Transverse colon (tissue), 4 donors: ENCODE measurements at regions of chr11 and their contacts with region 1.

Region 1: GRCh38 chr11:131796541-131796940 is 426.1 kb downstream of the NTM start:
- DNase-seq: no peak
- H3K4me3 ChIP-seq: no peak overlapping the region
- H3K27ac ChIP-seq: no peak overlapping the region
- H3K4me1 ChIP-seq: no peaks in the 10 kb centered on the region
- H3K27me3 ChIP-seq: no peaks in the 10 kb centered on the region
- CTCF ChIP-seq: no peak
- EP300 ChIP-seq: no peak
- POLR2A ChIP-seq: no peak

Region 2: DNA sequence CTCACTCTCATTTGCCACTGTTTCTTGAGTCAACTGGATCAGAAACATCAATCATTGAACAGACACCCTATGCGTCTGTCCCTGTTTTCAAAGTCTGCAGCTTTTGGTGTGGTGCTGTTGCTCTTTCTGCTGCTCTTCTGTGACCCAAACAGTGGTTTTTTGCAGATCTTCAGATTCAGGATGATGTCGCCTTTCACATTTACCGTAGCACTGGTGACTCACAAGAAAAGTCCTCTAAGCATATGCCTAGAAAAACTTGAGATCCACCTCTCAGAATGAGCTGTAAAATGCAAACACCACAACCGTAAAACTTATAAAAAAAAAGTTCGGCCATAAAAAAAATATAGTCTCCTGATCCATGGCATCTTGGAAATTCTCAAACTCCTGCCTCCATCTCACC is 25.7 kb before region 1 on chr11:
- in situ Hi-C with region 1: no loop called
- intact Hi-C with region 1: loop called (anchors 1 kb)
- DNase-seq: no peak
- H3K4me3 ChIP-seq: no peak overlapping the region
- H3K27ac ChIP-seq: no peak overlapping the region
- H3K4me1 ChIP-seq: no peaks in the 10 kb centered on the region
- H3K27me3 ChIP-seq: no peaks in the 10 kb centered on the region
- CTCF ChIP-seq: no peak
- EP300 ChIP-seq: no peak
- POLR2A ChIP-seq: no peak